Right ventricle myocardium inferior (tissue), 1 donor: ENCODE measurements at regions of chr7 and their contacts with region 1.

Region 1: GRCh38 chr7:44693721-44694285 is 54.8 kb upstream of the ZMIZ2 start:
- DNase-seq: peak; percentile 73
- ATAC-seq: peak; percentile 90

Region 2: GRCh38 chr7:44606450-44607254 is 87.2 kb before region 1 on chr7 and contains the start of gene OGDH:
- intact Hi-C with region 1: loop called (anchors 2 kb)
- DNase-seq: peak; percentile 100
- ATAC-seq: peak; percentile 98
- total RNA-seq, gene OGDH: 679 TPM

Region 3: DNA sequence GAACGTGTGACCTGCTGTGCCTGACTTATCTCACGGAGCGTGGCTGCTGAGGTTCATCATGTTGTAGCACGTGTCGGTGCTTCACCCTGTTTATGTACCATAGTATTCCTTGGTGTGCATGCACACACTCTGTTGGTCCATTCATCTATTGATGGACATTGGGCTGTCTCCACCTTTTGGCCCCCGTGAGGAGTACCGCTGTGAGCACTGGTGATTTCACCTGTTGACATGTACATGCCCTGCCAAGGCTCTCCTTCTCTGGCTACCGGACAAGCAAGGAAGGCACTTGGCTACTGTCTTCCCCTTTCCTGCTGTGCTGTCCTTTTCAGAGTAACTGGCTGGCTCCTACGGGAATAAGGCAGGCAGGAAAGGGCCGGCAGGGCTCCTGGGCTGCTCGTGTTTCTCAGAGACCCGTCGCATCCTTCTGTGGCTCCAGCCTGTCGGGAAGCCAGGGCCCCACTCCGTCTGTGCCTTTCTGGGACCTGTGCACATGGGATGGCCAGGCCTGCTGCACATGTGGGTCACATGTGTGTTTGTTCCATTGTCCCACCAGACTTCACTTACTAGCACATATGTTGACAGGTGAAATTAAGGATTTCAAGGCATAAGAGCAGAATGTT is 435.5 kb after region 1 on chr7:
- intact Hi-C with region 1: no loop called
- DNase-seq: no peak
- ATAC-seq: no peak